HCT116 (cell line): ENCODE measurements at regions of chr1 and their contacts with region 1.

Region 1: GRCh38 chr1:28505406-28506187 is at the start of gene RCC1:
- DNase-seq: peak; percentile 97
- ATAC-seq: peak; percentile 62
- H3K4me3 ChIP-seq: peak within 1 kb of the TSS; percentile 82 to 94
- H3K27ac ChIP-seq: peak within 1 kb of the TSS; percentile 97
- H3K4me1 ChIP-seq: peaks cover 29 to 72% of the 10 kb centered on the region in 2 experiments
- H3K27me3 ChIP-seq: no peaks in the 10 kb centered on the region
- CTCF ChIP-seq: no peak
- POLR2A ChIP-seq: peak; percentile 99
- RAD21 ChIP-seq: no peak
- total RNA-seq, gene RCC1: 124 TPM

Region 2: GRCh38 chr1:28437934-28438699 is 67.5 kb before region 1 on chr1:
- CTCF ChIA-PET with region 1: no interaction called
- POLR2A ChIA-PET with region 1: interaction called, 48 read pairs
- RAD21 ChIA-PET with region 1: no interaction called
- intact Hi-C with region 1: no loop called
- DNase-seq: peak; percentile 92
- ATAC-seq: peak; percentile 97
- H3K4me3 ChIP-seq: peak overlapping the region; percentile 3 to 49
- H3K27ac ChIP-seq: peak overlapping the region; percentile 88
- H3K4me1 ChIP-seq: peaks cover 29 to 50% of the 10 kb centered on the region in 2 experiments
- H3K27me3 ChIP-seq: no peaks in the 10 kb centered on the region
- CTCF ChIP-seq: no peak
- POLR2A ChIP-seq: peak; percentile 73
- RAD21 ChIP-seq: no peak